Right ventricle myocardium inferior (tissue), 1 donor: ENCODE measurements at regions of chr9 and their contacts with region 1.

Region 1: GRCh38 chr9:3647652-3648051 is 121.9 kb upstream of the RFX3 start:
- DNase-seq: no peak
- ATAC-seq: no peak

Region 2: GRCh38 chr9:3467593-3468219 is 179.9 kb before region 1 on chr9:
- intact Hi-C with region 1: loop called (anchors 5 kb)
- DNase-seq: peak; percentile 73
- ATAC-seq: peak; percentile 92